ENCODE measurements at regions of chr1 and their contacts with region 1.

Region 1: GRCh38 chr1:218377143-218377660 is 32.1 kb downstream of the TGFB2 start:
- DNase-seq: peak; percentile 83
- H3K4me3 Mint-ChIP-seq: peak overlapping the region; percentile 41
- H3K27ac Mint-ChIP-seq: peak overlapping the region; percentile 83
- H3K4me1 Mint-ChIP-seq: peaks cover 83% of the 10 kb centered on the region
- H3K27me3 Mint-ChIP-seq: no peaks in the 10 kb centered on the region
- CTCF ChIP-seq: no peak

Region 2: GRCh38 chr1:218426343-218426657 is 49.1 kb after region 1 on chr1:
- CTCF ChIA-PET with region 1: no interaction called
- intact Hi-C with region 1: loop called (anchors 2 kb)
- DNase-seq: peak; percentile 78
- H3K4me3 Mint-ChIP-seq: no peak overlapping the region
- H3K27ac Mint-ChIP-seq: peak overlapping the region; percentile 91
- H3K4me1 Mint-ChIP-seq: peaks cover 37% of the 10 kb centered on the region
- H3K27me3 Mint-ChIP-seq: no peaks in the 10 kb centered on the region
- CTCF ChIP-seq: no peak

Region 3: DNA sequence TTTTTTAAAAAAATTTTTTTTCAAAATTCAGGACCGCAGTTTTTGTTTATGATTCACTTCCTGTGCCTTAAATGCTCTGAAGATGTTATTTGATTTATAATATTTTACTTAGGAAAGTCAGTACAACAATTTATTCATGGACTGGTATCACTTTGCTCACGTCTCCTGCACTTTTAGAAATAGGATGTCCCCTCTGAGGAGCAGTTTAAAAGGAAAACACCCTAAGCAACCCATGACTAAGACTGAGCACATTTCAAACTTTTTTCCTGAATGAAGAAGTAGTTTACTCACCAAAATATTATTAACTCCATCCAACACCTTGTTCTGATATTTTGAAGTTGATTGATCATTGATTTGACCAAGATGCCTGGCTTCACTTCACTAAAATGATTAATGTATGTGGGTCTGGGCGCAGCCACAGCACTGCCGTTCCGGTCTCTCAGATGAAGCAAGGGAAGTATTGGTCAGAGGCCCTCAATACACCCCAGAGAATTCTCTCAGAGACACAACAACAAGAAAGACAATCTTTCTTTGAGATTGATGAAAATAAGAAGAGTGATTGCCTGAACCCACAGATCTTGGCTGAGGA is 191.9 kb after region 1 on chr1:
- CTCF ChIA-PET with region 1: no interaction called
- intact Hi-C with region 1: no loop called
- DNase-seq: no peak
- H3K4me3 Mint-ChIP-seq: no peak overlapping the region
- H3K27ac Mint-ChIP-seq: no peak overlapping the region
- H3K4me1 Mint-ChIP-seq: peaks cover 13% of the 10 kb centered on the region
- H3K27me3 Mint-ChIP-seq: no peaks in the 10 kb centered on the region
- CTCF ChIP-seq: no peak